ENCODE measurements at regions of chr4 and their contacts with region 1.

Region 1: DNA sequence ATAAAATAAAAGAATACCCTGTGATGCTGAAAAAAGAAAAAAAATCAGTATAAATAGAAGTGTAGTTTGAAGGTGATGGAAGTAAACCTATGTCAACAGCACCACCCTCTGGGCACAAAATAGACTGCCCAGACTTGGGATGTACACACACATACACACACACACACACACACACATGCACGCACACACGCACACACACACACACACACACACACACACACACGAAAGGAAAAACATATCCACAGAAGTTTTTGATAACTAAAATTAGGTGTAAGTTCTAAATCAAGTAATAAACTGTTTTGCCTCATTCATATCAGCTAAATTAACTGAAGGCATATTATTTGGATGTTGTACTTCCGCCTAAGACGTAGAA is 40.5 kb downstream of the ANXA5 start:
- DNase-seq: peak; percentile 52

Region 2: GRCh38 chr4:121462660-121463261 is 193.5 kb before region 1 on chr4:
- CTCF ChIA-PET with region 1: interaction called, 11 read pairs
- POLR2A ChIA-PET with region 1: no interaction called
- DNase-seq: peak; percentile 49

Measured in HEK293T (cell line).